K562 (cell line): ENCODE measurements at regions of chr3 and their contacts with region 1.

Region 1: DNA sequence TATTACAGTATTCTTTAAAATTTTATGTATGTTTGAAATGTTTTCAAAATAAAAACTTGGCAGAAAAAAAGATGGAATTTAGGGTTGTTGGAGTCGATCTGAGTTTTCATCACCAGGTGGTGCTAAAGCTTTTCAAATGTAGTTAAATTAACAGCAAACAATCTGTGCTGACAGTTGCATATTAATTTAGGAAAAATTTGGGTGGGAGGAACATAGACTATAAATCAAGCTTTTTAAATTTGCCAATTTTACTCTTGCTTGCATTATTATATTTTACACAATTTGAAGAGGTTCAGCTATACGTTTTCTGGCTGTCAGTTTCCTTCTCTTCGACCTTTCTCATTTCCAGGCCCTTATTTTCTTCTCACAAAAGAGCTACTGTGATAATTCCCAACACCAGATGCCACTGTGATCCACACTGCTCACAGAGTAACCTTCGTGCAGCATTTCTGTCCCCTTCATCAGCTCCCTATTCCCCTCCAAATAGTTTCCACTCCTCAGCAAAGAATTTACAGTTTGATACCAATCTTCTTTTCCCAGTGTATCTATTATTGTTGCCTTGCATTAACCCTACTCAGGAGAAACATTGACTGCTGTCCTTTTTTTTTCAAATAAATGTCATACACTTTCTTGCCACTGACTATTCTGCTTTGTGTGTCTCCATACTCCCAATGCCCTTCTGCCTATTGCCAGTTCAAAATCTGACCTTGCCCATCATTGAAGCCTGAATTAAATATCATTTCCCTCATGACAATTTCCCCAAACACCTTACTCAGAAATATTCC is 53.4 kb upstream of the EIF5A2 start:
- DNase-seq: peak in 3 of 4 experiments; percentile 15 to 52 (median 15)
- ATAC-seq: peak; percentile 51; the same call in 1 of the 3 replicates
- H3K4me3 ChIP-seq: no peak overlapping the region
- H3K27ac ChIP-seq: no peak overlapping the region
- H3K4me1 ChIP-seq: no peaks in the 10 kb centered on the region
- H3K27me3 ChIP-seq: no peaks in the 10 kb centered on the region
- CTCF ChIP-seq: peak; percentile 29 to 78 (median 49); a peak in 4 of 6 replicates
- EP300 ChIP-seq: no peak
- POLR2A ChIP-seq: no peak
- RAD21 ChIP-seq: peak; percentile 89 to 91

Region 2: GRCh38 chr3:171049861-171050444 is 88.1 kb after region 1 on chr3:
- CTCF ChIA-PET with region 1: no interaction called
- POLR2A ChIA-PET with region 1: no interaction called
- in situ Hi-C with region 1: no loop called
- intact Hi-C with region 1: loop called (anchors 5 kb)
- DNase-seq: peak; percentile 27 to 65 (median 45)
- ATAC-seq: peak; percentile 94
- H3K4me3 ChIP-seq: no peak overlapping the region
- H3K27ac ChIP-seq: no peak overlapping the region
- H3K4me1 ChIP-seq: no peaks in the 10 kb centered on the region
- H3K27me3 ChIP-seq: 0 out of 5 replicates have a peak, but pooled peaks cover 0 to 2% of the 10 kb centered on the region in 2 experiments
- CTCF ChIP-seq: peak; percentile 72 to 83 (median 78)
- EP300 ChIP-seq: no peak
- POLR2A ChIP-seq: no peak
- RAD21 ChIP-seq: peak; percentile 75 to 90

Region 3: DNA sequence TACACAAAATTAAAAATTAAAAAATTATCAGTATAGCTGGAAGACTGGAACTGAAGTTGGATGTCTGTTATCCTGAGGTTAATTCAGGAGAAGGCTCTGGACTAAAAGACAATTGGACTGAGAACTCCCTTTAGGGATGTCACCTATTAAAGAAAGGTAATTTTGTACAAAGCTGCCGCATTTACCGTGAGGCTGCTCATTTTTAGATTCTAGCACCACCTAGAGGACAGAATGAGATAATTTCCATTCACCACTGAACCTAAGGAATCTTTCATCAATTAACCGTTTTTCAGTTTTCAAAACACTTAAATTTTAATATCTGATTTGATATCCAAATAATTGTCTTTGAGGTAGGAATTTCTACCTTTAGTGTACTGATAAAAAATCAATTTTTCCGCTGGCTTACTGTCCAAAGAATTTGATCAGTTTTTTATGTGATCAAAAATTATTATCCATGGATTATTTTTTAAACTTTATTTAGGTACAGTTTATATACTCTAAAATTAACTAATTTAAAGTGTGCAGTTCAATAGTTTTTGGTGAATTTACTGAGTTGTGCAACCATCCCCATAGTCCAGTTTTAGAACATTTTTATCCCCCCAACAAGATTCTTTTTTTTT is 605.1 kb after region 1 on chr3:
- CTCF ChIA-PET with region 1: interaction called, 20 read pairs
- POLR2A ChIA-PET with region 1: interaction called, 3 read pairs
- in situ Hi-C with region 1: loop called (anchors 5 kb)
- intact Hi-C with region 1: loop called (anchors 1 kb)
- DNase-seq: peak; percentile 53 to 64 (median 62)
- ATAC-seq: peak; percentile 79
- H3K4me3 ChIP-seq: no peak overlapping the region
- H3K27ac ChIP-seq: no peak overlapping the region
- H3K4me1 ChIP-seq: no peaks in the 10 kb centered on the region
- H3K27me3 ChIP-seq: no peaks in the 10 kb centered on the region
- CTCF ChIP-seq: peak; percentile 58 to 91 (median 68); a peak in 5 of 6 replicates
- EP300 ChIP-seq: no peak
- POLR2A ChIP-seq: no peak
- RAD21 ChIP-seq: peak; percentile 93 to 97

Region 4: DNA sequence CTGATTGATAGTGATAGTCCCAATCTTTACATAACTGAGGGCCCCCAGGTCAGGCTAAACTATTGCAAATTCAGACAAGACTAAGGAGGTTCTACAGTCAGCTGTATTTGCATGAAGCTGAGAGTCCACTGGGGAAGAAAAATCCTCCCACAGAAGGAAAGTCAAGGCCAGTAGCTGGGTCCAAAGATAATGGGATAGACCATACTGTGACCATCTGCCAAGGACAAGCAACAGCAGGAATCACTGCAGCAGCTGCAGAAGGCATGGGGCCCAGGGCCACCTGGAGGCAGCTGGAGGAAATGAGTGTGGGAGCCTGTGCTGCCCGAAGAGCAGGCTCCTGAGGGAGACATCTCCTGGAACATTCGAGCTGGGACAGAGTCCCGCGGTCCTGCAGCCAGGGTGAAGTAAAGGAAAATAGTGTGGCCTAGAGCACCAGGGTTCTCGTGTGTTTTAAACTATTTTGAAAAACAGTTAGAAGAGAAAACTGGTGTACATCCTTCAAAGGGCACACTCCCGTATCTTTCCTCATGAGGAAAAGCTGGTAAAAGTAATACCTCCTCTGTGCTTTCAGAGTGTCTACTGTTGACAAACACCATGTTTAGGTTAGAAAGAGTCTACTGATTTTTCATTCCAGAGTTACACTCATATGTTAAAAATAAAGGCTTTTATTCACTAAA is 868.2 kb after region 1 on chr3:
- CTCF ChIA-PET with region 1: interaction called, 10 read pairs
- POLR2A ChIA-PET with region 1: no interaction called
- in situ Hi-C with region 1: no loop called
- intact Hi-C with region 1: loop called (anchors 2 kb)
- DNase-seq: peak in 2 of 4 experiments; percentile 58 to 80
- ATAC-seq: peak; percentile 96
- H3K4me3 ChIP-seq: no peak overlapping the region
- H3K27ac ChIP-seq: no peak overlapping the region
- H3K4me1 ChIP-seq: peaks cover 0 to 15% of the 10 kb centered on the region in 2 experiments; a peak in 3 of 5 replicates
- H3K27me3 ChIP-seq: no peaks in the 10 kb centered on the region
- CTCF ChIP-seq: peak; percentile 71 to 83 (median 75)
- EP300 ChIP-seq: no peak
- POLR2A ChIP-seq: no peak
- RAD21 ChIP-seq: peak; percentile 69 to 89

Region 5: DNA sequence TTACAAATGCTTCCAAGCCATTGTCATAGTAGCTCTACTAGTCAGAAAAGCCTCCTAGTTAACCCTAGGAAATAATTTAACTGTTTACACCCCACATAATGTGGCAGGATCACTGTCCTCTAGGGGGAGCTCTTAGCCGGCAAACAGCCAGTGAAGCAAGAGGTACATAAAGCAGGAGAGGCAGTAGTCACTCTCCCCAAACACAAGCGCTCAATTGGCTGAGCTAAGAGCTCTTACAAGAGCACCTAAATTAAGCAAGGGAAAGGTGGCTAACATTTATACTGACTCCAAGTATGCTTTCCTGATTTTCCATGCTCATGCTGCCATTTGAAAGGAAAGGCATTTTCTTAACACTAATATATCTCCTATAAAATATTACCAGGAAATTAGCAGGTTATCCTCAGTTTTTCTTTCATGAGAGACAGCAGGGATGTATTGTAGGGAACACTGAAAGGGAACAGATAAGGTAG is 1711.4 kb after region 1 on chr3:
- CTCF ChIA-PET with region 1: no interaction called
- POLR2A ChIA-PET with region 1: no interaction called
- in situ Hi-C with region 1: no loop called
- intact Hi-C with region 1: loop called (anchors 10 kb)
- DNase-seq: peak; percentile 28 to 85 (median 50)
- ATAC-seq: peak; percentile 98
- H3K4me3 ChIP-seq: no peak overlapping the region
- H3K27ac ChIP-seq: no peak overlapping the region
- H3K4me1 ChIP-seq: no peaks in the 10 kb centered on the region
- H3K27me3 ChIP-seq: no peaks in the 10 kb centered on the region
- CTCF ChIP-seq: peak; percentile 81 to 85 (median 82)
- EP300 ChIP-seq: no peak
- POLR2A ChIP-seq: no peak
- RAD21 ChIP-seq: peak; percentile 67 to 82